Mucosa of descending colon (tissue), 3 donors: ENCODE measurements at regions of chr10 and their contacts with region 1.

Region 1: DNA sequence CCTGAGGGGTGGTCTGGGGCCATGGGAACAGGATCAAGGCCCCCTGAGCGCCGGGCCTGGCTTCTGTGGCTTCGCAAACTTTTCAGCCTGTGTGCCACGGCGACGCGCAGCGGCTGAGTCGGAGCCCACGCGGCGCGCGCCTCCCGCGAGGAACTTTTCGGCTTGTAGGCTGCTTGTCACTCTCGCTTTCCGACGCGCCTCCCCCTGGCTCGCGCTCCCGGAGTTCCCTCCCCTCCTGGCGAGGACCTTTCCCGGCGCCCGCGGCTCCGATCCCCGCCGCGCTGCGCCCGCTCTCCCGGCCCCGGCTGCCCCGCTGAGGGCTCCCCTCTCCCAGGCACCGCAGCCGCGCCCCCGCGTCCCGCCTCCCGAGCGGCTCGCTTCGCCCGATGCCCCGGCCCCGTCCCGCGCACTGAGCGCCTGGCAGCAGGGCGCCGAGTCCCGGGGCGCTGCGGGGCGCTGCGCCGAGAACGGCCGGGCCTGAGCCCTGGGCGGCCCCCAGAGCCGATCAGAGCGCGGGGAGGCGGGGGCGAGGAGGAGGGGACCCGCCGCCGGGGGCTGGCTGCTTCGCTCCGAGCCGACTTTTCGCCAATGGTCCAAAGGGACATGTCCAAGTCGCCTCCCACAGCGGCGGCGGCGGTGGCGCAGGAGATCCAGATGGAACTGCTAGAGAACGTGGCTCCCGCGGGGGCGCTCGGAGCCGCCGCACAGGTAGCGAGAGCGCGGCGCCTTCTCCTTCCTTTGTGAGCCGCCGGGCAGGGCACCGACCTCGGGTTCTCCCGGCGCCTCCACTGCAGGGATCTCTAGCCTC is at the start of gene CACNB2:
- DNase-seq: peak; percentile 71 to 81 (median 74)
- ATAC-seq: peak; percentile 79
- H3K4me3 ChIP-seq: peak within 1 kb of the TSS; percentile 26
- H3K4me1 ChIP-seq: peaks cover 5% of the 10 kb centered on the region
- CTCF ChIP-seq: no peak
- total RNA-seq, gene CACNB2: 13.6 to 26.2 (median 19.8) TPM

Region 2: DNA sequence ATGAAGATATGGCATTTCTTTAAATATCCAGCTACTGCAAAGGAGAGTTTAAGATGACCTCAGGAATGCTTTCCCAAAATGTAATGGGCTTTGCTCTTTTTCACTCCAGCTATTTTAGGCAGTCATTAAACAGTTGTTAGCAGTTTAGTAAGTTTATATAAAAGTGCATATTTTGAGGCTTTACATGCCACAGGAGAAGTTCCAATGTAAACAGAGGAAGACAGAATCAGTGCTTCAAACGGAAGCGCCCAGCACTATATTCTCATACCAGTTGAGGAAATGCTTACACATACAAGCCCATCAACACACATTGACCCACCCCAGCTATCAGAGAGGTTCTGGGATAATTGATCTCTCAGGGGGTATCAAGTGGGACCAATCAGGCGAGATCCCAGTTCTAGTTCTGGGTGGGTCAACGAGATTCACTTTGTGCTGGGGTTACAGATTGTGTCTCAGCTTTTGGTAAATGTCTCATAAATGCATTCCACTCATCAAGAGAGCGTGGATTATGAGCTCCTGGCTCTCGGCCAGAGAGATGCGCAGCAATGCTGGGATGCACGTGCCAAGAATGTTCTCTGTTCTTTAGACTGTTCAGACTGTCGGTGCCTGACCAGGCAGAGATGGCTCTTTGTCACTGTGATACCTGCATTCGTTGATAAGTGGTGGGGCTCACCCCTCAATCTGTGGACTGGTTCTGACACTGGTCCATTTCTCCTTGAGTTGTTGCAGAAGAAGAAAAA is 54.9 kb after region 1 on chr10:
- intact Hi-C with region 1: loop called in 1 of 2 experiments (anchors 10 kb)
- DNase-seq: peak in 2 of 3 donors; percentile 29 to 31
- ATAC-seq: peak; percentile 26
- H3K4me3 ChIP-seq: no peak overlapping the region
- H3K4me1 ChIP-seq: no peaks in the 10 kb centered on the region
- CTCF ChIP-seq: no peak

Region 3: GRCh38 chr10:18238870-18239485 is 98.6 kb after region 1 on chr10:
- intact Hi-C with region 1: no loop called
- DNase-seq: peak in 1 of 3 donors; percentile 30
- ATAC-seq: peak; percentile 26
- H3K4me3 ChIP-seq: no peak overlapping the region
- H3K4me1 ChIP-seq: no peaks in the 10 kb centered on the region
- CTCF ChIP-seq: peak; percentile 30